ENCODE measurements at regions of chr19 and their contacts with region 1.

Region 1: GRCh38 chr19:32674959-32675719 is at the start of gene ANKRD27:
- DNase-seq: peak; percentile 95 to 100 (median 98)

Region 2: DNA sequence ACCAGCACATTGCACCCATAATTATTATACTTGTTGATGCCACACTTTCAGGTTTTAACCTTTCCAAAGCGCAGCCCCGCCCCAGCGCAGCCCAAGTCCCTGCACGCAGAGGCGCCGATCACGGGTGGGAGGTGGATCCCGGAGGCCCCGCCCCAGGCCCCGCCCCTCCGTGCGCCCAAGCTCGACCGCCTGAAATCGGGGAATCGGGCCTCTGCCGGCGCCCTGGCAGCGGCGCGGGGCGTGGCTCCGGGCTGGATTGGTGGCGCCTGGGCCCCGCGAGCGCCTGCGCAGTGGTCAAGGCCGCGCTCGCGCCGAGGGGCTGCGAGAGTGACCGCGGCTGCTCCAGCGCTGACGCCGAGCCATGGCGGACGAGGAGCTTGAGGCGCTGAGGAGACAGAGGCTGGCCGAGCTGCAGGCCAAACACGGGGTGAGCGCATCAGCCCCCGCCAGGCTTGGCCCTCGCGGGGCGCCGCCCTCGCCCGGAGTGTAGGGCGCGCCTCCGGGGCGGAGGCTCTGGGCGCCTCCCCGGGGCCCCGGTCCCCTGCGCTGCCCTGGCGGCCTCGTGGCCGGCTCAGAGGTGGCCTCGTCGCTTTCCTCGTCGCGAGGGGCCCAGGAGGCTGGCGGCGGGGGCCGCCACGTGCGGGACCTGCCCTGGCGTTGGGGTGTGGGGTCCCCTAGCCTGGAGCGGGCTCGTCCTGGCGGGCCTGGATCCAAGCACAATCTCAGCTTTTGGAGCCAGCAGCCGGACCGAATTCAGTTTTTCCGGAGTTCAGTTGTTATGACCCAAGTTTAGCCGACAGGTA is 94.0 kb before region 1 on chr19 and contains the start of gene PDCD5:
- intact Hi-C with region 1: loop called (anchors 10 kb)
- DNase-seq: peak; percentile 90 to 99 (median 96)

Region 3: DNA sequence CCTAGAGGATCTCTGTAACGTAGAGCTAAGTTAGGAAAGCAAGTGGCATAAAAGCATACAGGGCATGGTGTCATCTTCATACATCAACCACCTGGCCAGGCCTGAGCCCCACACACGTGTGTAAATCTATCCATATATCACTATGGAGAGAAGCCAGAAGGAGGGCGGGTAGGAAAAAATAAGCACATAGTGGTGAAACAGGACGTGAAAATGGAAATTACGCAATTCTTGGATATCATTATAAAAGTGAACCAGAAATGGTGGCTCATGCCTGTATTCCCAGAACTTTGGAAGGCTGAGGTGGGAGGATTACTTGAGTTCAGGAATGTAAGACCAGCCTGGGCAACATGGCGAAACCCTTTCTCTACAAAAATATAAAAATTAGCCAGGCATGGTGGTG is 50.7 kb before region 1 on chr19:
- intact Hi-C with region 1: no loop called
- DNase-seq: peak in 2 of 10 donors; percentile 4 to 6

Region 4: GRCh38 chr19:32691291-32691951 is 16.3 kb after region 1 on chr19 and contains the start of gene NUDT19:
- intact Hi-C with region 1: loop called (anchors 2 kb)
- DNase-seq: peak; percentile 70 to 97 (median 86)

Region 5: GRCh38 chr19:32719611-32720059 is 44.5 kb after region 1 on chr19 and contains the start of gene TDRD12:
- intact Hi-C with region 1: no loop called
- DNase-seq: peak in 2 of 10 donors; percentile 70 to 73

Region 6: DNA sequence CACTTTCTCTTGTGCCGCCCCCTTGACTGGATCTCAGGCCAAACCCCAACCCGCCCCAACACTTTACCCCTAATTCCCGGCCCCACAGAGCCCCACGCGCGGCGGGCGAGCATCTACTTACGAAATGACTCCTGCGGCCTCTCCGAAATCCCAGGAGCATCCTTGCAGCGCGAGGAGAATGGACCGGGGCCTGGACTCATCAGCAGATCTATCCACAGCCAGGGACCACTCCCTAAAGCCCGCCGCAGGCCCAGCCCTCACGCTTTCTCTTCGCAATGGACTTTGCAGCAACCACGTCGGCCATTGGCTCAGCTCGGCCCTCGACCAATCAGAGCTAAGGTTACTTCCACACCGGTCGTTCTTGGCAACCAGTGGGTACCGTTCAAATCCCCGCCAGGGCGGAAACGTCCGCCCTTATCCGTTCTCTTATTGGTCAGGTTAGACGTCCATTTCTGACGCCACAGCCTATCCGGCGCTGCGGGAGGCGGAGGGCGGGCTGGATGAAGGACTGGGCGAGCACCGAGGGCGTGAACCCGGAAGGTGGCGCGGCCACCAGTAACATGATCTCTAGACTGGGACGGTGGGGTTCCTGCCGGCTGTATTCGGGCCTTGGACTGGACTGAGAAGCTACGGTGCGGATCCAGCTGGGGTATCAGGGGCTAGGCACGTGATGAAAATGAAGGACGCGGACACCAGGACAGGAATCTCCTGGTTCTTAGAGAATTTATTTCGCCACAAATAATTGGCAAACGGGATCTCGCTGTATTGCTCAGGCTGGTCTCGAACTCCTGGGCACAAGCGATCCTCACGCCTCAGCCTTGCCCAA is 296.8 kb after region 1 on chr19 and contains the starts of genes CEP89 and FAAP24:
- intact Hi-C with region 1: loop called (anchors 10 kb)
- DNase-seq: peak; percentile 96 to 100 (median 98)